CD8-positive, alpha-beta T cell (primary cell): ENCODE measurements at regions of chr7 and their contacts with region 1.

Region 1: GRCh38 chr7:38908759-38909335 is at the start of gene VPS41:
- DNase-seq: peak; percentile 53 to 90 (median 81)
- ATAC-seq: peak; percentile 99
- H3K4me3 ChIP-seq: peak within 1 kb of the TSS; percentile 78 to 92
- H3K4me3 Mint-ChIP-seq: peak within 1 kb of the TSS; percentile 99
- H3K27ac ChIP-seq: peak within 1 kb of the TSS; percentile 44 to 66
- H3K27ac Mint-ChIP-seq: peak within 1 kb of the TSS; percentile 92
- H3K4me1 ChIP-seq: peaks cover 11% of the 10 kb centered on the region
- H3K4me1 Mint-ChIP-seq: peaks cover 32% of the 10 kb centered on the region
- H3K27me3 ChIP-seq: no peaks in the 10 kb centered on the region
- H3K27me3 Mint-ChIP-seq: no peaks in the 10 kb centered on the region
- CTCF ChIP-seq: no peak
- total RNA-seq, gene VPS41: 16.3 to 23.0 TPM

Region 2: GRCh38 chr7:38107486-38107893 is 801.4 kb before region 1 on chr7:
- CTCF ChIA-PET with region 1: no interaction called
- POLR2A ChIA-PET with region 1: no interaction called
- intact Hi-C with region 1: loop called in 1 of 2 experiments (anchors 5 kb)
- DNase-seq: peak; percentile 33 to 80 (median 71)
- ATAC-seq: peak; percentile 87
- H3K4me3 ChIP-seq: no peak overlapping the region
- H3K4me3 Mint-ChIP-seq: no peak overlapping the region
- H3K27ac ChIP-seq: no peak overlapping the region
- H3K27ac Mint-ChIP-seq: no peak overlapping the region
- H3K4me1 ChIP-seq: no peaks in the 10 kb centered on the region
- H3K4me1 Mint-ChIP-seq: peaks cover 2% of the 10 kb centered on the region
- H3K27me3 ChIP-seq: peaks cover 0 to 2% of the 10 kb centered on the region in 2 experiments
- H3K27me3 Mint-ChIP-seq: peaks cover 8% of the 10 kb centered on the region
- CTCF ChIP-seq: peak; percentile 89

Region 3: GRCh38 chr7:38178004-38178694 is 730.7 kb before region 1 on chr7 and contains the start of gene STARD3NL:
- CTCF ChIA-PET with region 1: no interaction called
- POLR2A ChIA-PET with region 1: no interaction called
- intact Hi-C with region 1: loop called in 1 of 2 experiments (anchors 10 kb)
- DNase-seq: peak; percentile 64 to 100 (median 87)
- ATAC-seq: peak; percentile 94
- H3K4me3 ChIP-seq: peak within 1 kb of the TSS; percentile 72 to 93
- H3K4me3 Mint-ChIP-seq: peak within 1 kb of the TSS; percentile 96
- H3K27ac ChIP-seq: peak within 1 kb of the TSS; percentile 78 to 93
- H3K27ac Mint-ChIP-seq: peak within 1 kb of the TSS; percentile 96
- H3K4me1 ChIP-seq: peaks cover 24% of the 10 kb centered on the region
- H3K4me1 Mint-ChIP-seq: peaks cover 38% of the 10 kb centered on the region
- H3K27me3 ChIP-seq: no peaks in the 10 kb centered on the region
- H3K27me3 Mint-ChIP-seq: peaks cover 11% of the 10 kb centered on the region
- CTCF ChIP-seq: no peak
- total RNA-seq, gene STARD3NL: 22.4 to 22.7 TPM

Region 4: GRCh38 chr7:39035903-39036302 is 127.1 kb after region 1 on chr7:
- CTCF ChIA-PET with region 1: no interaction called
- POLR2A ChIA-PET with region 1: no interaction called
- intact Hi-C with region 1: no loop called
- DNase-seq: no peak
- ATAC-seq: no peak
- H3K4me3 ChIP-seq: no peak overlapping the region
- H3K4me3 Mint-ChIP-seq: no peak overlapping the region
- H3K27ac ChIP-seq: no peak overlapping the region
- H3K27ac Mint-ChIP-seq: no peak overlapping the region
- H3K4me1 ChIP-seq: no peaks in the 10 kb centered on the region
- H3K4me1 Mint-ChIP-seq: no peaks in the 10 kb centered on the region
- H3K27me3 ChIP-seq: no peaks in the 10 kb centered on the region
- H3K27me3 Mint-ChIP-seq: peaks cover 5% of the 10 kb centered on the region
- CTCF ChIP-seq: no peak

Region 5: DNA sequence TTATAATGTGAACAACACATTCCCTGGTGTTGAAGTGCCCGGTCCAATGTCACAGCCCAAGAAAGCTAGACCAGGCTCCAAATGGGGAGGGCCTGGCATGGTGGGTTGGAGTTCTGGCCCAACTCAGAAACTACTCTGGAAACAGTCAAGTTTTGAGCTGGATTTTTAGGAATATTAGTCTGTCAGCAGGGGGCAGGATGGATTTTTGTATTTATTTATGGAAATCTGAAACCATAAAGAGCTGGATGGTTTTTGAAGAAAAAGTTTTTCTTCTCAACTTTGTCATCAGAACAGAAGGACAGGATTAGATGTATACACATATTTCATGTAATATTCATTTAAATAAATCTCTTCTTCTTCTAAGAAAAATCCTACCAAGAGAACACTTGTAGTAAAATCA is 166.4 kb after region 1 on chr7:
- CTCF ChIA-PET with region 1: no interaction called
- POLR2A ChIA-PET with region 1: no interaction called
- intact Hi-C with region 1: no loop called
- DNase-seq: no peak
- ATAC-seq: no peak
- H3K4me3 ChIP-seq: no peak overlapping the region
- H3K4me3 Mint-ChIP-seq: no peak overlapping the region
- H3K27ac ChIP-seq: no peak overlapping the region
- H3K27ac Mint-ChIP-seq: no peak overlapping the region
- H3K4me1 ChIP-seq: no peaks in the 10 kb centered on the region
- H3K4me1 Mint-ChIP-seq: no peaks in the 10 kb centered on the region
- H3K27me3 ChIP-seq: no peaks in the 10 kb centered on the region
- H3K27me3 Mint-ChIP-seq: peaks cover 2% of the 10 kb centered on the region
- CTCF ChIP-seq: no peak

Region 6: DNA sequence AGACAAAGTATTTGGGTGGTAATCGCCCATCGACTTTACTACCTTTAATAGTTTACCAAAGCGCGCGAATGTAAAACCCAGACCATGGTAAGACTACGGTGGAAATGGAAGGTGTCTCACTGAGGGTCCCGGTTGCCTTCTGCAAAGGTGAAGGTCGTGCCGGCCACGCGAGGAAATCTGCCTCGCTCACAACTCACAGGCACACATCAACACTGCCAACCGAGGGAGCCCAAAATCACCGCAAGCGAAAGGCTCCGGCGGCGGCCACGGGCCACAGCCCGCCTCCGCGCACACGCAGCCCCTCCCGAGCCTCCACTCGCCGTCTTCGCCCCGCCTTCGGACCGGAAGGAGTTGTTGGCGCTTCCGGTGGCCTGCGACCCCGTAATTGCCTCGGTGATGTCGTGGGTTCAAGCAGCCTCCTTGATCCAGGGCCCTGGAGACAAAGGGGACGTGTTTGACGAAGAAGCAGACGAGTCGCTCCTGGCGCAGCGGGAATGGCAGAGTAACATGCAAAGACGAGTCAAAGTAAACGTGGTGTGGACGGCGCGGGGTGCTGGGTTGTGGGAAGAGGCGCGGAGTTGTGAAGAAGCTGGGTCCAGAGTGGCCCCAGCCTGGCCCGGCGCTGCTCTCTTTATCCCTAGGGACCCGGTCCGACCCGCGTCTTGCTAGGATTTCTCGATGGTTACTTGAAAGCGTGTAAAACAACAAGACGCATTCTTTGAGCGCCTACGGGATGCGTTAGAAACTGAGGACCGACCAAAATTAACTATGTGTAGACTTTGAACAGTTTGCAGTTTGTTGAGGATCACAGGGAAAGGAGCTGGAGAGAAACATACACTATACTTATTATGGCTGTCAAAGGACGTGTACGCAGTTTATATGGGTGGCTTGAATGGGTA is 657.4 kb after region 1 on chr7 and contains the start of gene YAE1:
- CTCF ChIA-PET with region 1: no interaction called
- POLR2A ChIA-PET with region 1: no interaction called
- intact Hi-C with region 1: loop called in 1 of 2 experiments (anchors 5 kb)
- DNase-seq: peak; percentile 60 to 89 (median 81)
- ATAC-seq: peak; percentile 91
- H3K4me3 ChIP-seq: peak within 1 kb of the TSS; percentile 83 to 86
- H3K4me3 Mint-ChIP-seq: peak within 1 kb of the TSS; percentile 99
- H3K27ac ChIP-seq: peak within 1 kb of the TSS; percentile 79 to 80
- H3K27ac Mint-ChIP-seq: peak within 1 kb of the TSS; percentile 99
- H3K4me1 ChIP-seq: peaks cover 9% of the 10 kb centered on the region
- H3K4me1 Mint-ChIP-seq: peaks cover 35% of the 10 kb centered on the region
- H3K27me3 ChIP-seq: no peaks in the 10 kb centered on the region
- H3K27me3 Mint-ChIP-seq: no peaks in the 10 kb centered on the region
- CTCF ChIP-seq: no peak
- total RNA-seq, gene YAE1: 5.2 to 8.8 TPM

Region 7: DNA sequence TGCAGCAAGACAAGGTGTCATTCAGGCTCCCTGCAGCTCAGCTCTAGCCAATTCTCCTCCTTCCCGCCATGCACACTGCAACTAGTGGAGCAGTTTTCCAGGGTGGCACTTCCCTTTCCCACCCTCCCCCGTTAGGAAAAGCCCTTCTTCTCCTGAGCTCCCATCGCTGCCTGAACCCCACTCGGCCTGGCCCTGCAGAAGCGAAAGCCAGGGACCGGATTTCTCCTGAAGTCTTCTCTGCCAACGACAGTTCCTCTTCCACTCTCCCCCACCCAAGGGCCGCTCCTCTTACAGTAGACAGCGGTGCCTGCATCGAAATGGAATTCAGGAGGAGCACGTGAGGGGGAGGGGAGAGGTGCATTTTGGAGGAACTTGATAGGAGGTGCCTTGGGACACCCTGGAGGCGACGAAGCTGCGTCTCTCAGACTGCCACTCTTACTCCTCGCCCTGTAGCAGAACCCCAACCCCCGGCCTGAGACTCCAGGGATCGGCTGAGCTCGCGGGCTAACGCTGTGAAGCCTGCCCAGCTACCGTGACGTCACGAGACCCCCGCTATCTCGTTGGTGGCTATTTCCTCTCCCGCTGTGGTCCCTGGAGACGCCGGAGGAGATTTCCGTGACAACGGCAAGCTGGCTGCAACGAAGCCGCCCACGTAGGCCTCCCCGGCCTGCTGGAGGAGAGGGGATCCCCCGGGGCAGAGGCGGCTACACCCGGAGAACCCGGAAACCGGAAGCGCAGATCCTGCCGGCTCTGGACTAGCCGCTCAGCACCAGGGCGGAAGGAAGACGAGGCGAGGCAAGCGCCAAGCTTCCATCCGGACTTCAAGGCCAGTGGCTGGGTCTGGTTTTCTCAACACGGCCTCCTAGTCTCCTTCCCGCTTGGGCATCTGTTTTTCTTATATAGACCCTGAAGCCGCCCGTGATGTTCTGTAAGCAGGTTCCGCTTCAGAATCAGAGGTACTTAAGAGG is 824.3 kb after region 1 on chr7:
- CTCF ChIA-PET with region 1: no interaction called
- POLR2A ChIA-PET with region 1: no interaction called
- intact Hi-C with region 1: loop called in 1 of 2 experiments (anchors 5 kb)
- DNase-seq: peak; percentile 84 to 98 (median 95)
- ATAC-seq: peak; percentile 92
- H3K4me3 ChIP-seq: peak overlapping the region; percentile 79 to 85
- H3K4me3 Mint-ChIP-seq: peak overlapping the region; percentile 91
- H3K27ac ChIP-seq: peak overlapping the region; percentile 66 to 91
- H3K27ac Mint-ChIP-seq: peak overlapping the region; percentile 94
- H3K4me1 ChIP-seq: peaks cover 26% of the 10 kb centered on the region
- H3K4me1 Mint-ChIP-seq: peaks cover 40% of the 10 kb centered on the region
- H3K27me3 ChIP-seq: no peaks in the 10 kb centered on the region
- H3K27me3 Mint-ChIP-seq: no peaks in the 10 kb centered on the region
- CTCF ChIP-seq: no peak

Region 8: DNA sequence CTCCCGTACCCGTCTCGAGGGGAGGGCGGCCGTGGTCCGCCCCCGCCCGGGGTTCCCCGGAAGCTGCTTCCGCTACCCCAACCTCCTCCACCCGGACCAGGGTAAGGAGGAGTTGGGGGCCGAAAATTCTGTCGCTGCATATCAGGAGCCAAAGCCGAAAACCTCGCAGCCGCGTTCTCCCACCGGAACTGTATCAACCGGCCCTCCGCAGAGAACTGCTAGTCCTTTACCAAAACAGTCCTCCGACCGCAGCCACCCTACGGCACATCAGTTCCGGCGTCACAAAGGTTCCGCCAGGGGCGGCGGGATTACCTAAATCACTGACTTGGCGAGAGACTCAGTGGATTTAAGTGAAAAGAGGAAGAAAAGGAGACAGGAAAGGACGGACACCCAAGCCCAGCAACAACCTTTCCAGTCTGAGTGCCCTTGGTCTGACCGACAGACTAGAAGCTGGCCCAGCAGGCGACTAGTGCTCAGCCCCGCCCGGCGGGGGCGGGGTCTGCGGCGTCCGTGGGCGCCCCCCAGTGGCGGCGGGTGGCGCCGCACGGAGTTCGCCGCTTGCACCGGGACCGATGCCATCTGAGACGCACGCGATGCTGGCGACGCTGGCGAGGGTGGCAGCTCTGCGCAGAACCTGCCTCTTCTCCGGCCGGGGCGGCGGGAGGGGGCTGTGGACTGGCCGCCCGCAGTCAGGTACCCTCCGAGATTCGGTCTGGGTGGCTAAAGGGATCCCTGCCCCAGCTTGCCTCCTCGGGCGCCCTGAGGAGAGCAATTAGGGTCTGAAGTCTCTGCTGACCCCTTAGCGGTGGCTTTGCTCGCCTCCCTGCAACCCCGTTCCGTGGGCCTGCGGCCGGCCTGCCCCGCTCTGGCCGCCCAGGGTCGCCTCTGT is 1225.8 kb after region 1 on chr7 and contains the starts of genes MPLKIP and SUGCT:
- CTCF ChIA-PET with region 1: no interaction called
- POLR2A ChIA-PET with region 1: no interaction called
- intact Hi-C with region 1: loop called (anchors 2 kb)
- DNase-seq: peak; percentile 72 to 93 (median 86)
- ATAC-seq: peak; percentile 89
- H3K4me3 ChIP-seq: peak within 1 kb of the TSS; percentile 86 to 98
- H3K4me3 Mint-ChIP-seq: peak within 1 kb of the TSS; percentile 99
- H3K27ac ChIP-seq: peak within 1 kb of the TSS; percentile 85 to 87
- H3K27ac Mint-ChIP-seq: peak within 1 kb of the TSS; percentile 98
- H3K4me1 ChIP-seq: peaks cover 33% of the 10 kb centered on the region
- H3K4me1 Mint-ChIP-seq: peaks cover 41% of the 10 kb centered on the region
- H3K27me3 ChIP-seq: no peaks in the 10 kb centered on the region
- H3K27me3 Mint-ChIP-seq: no peaks in the 10 kb centered on the region
- CTCF ChIP-seq: peak; percentile 90
- total RNA-seq, gene MPLKIP: 11.2 to 13.3 TPM
- total RNA-seq, gene SUGCT: 1.7 to 3.4 TPM